ENCODE measurements at regions of chr19 and their contacts with region 1.

Region 1: GRCh38 chr19:42450314-42450934 is 7.7 kb upstream of the CXCL17 start:
- DNase-seq: peak; percentile 97
- ATAC-seq: peak; percentile 87 to 91
- H3K4me3 ChIP-seq: no peak overlapping the region
- H3K27ac ChIP-seq: peak overlapping the region; percentile 1 to 12; a peak in 3 of 6 replicates
- H3K4me1 ChIP-seq: peaks cover 29% of the 10 kb centered on the region
- CTCF ChIP-seq: peak; percentile 100
- EP300 ChIP-seq: no peak
- POLR2A ChIP-seq: no peak
- RAD21 ChIP-seq: peak; percentile 100

Region 2: DNA sequence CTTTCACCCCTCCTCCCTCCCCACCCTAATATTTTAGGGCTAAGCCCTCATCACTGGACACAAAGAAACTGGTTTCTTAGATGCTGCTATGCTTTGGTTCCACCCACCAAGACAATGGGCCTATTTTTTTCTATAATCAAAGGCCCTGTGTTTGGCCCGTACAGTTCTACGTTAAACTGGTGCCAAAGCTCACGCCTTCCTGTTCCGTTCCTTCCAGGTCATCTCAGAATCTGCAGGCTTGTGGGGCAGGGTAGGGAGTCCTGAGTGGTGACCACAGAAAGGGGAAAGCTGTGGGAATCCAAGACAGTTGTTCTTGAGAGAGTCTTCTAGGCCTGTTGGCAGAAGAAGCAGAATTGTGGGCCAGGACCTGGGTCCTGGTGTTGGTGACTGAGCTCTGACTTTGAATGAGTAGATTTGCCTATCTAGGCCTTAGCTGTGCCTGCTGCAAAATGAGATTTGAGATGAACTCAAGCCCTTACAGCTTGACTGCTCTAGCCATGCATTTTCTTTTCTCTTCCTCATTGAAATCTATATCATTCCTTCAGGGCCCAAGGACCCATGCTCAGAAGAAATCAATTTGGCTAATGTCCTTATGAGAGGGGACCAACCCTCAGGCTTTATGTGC is 11.4 kb after region 1 on chr19:
- CTCF ChIA-PET with region 1: interaction called, 34 read pairs
- POLR2A ChIA-PET with region 1: interaction called, 4 read pairs
- DNase-seq: no peak
- ATAC-seq: no peak
- H3K4me3 ChIP-seq: no peak overlapping the region
- H3K27ac ChIP-seq: no peak overlapping the region
- H3K4me1 ChIP-seq: no peaks in the 10 kb centered on the region
- CTCF ChIP-seq: no peak
- EP300 ChIP-seq: no peak
- POLR2A ChIP-seq: no peak
- RAD21 ChIP-seq: no peak

Region 3: GRCh38 chr19:42487032-42487797 is 36.8 kb after region 1 on chr19:
- CTCF ChIA-PET with region 1: interaction called, 23 read pairs
- POLR2A ChIA-PET with region 1: no interaction called
- DNase-seq: no peak
- ATAC-seq: no peak
- H3K4me3 ChIP-seq: no peak overlapping the region
- H3K27ac ChIP-seq: no peak overlapping the region
- H3K4me1 ChIP-seq: peaks cover 12% of the 10 kb centered on the region; the same call in 2 of the 3 replicates
- CTCF ChIP-seq: no peak
- EP300 ChIP-seq: no peak
- POLR2A ChIP-seq: no peak
- RAD21 ChIP-seq: no peak

Region 4: GRCh38 chr19:42521346-42522030 is 71.1 kb after region 1 on chr19:
- CTCF ChIA-PET with region 1: interaction called, 352 read pairs
- POLR2A ChIA-PET with region 1: no interaction called
- DNase-seq: no peak
- ATAC-seq: no peak
- H3K4me3 ChIP-seq: no peak overlapping the region
- H3K27ac ChIP-seq: no peak overlapping the region
- H3K4me1 ChIP-seq: no peaks in the 10 kb centered on the region
- CTCF ChIP-seq: no peak
- EP300 ChIP-seq: no peak
- POLR2A ChIP-seq: no peak
- RAD21 ChIP-seq: no peak

Region 5: DNA sequence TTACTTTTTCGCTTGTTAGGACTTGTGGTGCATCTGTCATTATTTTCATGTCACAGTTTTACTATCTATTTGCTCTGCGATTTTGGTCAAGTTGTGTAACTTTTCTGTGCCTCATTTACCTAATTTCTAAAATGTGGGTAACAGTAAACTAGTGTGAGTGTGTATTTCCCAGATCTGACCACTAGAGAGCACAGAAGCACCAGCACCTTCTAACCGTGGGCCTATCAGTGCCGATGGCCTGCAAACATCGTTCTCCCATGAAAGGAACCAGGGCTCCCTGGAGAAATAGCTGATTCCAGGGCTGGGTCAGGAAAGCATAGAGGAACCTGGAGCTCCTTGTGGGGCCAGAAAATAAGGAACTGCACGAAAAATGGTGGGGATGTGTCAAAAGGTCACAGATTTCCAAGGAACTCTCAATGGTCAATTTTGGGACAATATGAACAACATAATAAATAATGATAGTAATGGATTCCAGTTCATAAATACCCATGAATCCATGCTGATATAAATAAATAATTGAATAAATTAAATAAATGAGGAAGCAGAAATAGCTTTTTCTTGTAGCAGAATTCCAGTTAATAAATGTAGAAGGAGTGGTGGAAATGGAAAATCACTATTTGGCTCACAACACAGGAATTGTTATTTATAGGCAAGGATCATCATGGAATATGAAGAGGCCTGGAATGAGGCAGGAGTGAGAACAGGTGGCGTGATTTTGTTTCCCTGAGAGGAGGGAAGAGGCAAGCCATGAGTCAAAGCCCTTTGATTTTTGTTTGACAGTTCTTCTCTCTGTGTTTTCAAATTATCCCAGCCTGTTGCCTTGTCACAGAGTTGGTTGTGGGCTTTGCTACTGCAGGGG is 113.2 kb after region 1 on chr19:
- CTCF ChIA-PET with region 1: interaction called, 82 read pairs
- POLR2A ChIA-PET with region 1: no interaction called
- DNase-seq: peak; percentile 76 to 95
- ATAC-seq: peak; percentile 79 to 91
- H3K4me3 ChIP-seq: no peak overlapping the region
- H3K27ac ChIP-seq: no peak overlapping the region
- H3K4me1 ChIP-seq: no peaks in the 10 kb centered on the region
- CTCF ChIP-seq: peak; percentile 81
- EP300 ChIP-seq: no peak
- POLR2A ChIP-seq: no peak
- RAD21 ChIP-seq: peak; percentile 77 to 78

Region 6: DNA sequence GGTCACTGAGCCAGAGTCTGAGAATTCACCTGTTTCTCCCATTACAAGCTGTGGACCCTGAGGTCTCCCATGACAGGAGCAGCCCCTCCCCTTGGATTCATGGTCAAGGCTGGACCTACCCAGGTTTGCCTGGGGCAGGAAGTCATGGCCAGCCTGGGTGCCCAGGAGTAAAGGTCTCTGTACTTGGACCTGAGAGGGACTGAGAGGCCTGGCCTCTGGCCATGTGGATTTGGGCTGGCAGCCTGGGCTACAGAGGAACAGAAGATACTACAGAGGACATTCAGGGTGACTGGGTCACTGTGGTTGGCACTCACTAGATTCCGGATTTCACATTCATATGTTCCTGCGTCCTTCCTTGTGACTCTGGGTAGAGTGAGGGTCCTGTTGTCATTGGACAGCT is 175.8 kb after region 1 on chr19:
- CTCF ChIA-PET with region 1: no interaction called
- POLR2A ChIA-PET with region 1: no interaction called
- DNase-seq: no peak
- ATAC-seq: no peak; a peak in 1 of 6 replicates
- H3K4me3 ChIP-seq: no peak overlapping the region
- H3K27ac ChIP-seq: no peak overlapping the region
- H3K4me1 ChIP-seq: no peaks in the 10 kb centered on the region
- CTCF ChIP-seq: no peak
- EP300 ChIP-seq: no peak
- POLR2A ChIP-seq: no peak
- RAD21 ChIP-seq: no peak

Measured in A549 (cell line).